CD4-positive, alpha-beta T cell (primary cell): ENCODE measurements at regions of chr7 and their contacts with region 1.

Region 1: DNA sequence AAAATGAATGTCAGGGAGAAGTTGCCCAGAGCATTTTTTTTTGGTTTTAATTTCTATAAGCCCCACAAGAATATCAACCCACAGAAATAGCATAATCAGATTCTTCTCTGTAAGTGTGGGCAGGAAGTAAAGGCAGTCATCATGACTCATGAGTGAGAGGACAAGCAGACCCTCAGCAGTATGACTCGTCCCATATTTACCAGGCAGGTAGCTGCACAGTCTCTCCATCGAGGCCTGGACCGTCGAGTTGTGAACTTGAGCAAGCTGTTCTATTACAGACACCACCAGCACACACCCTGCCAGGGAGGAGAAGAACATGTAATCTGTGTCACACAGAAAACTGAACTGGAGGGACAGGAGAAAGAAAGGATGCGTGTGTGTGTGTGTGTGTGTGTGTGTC is 37.8 kb downstream of the AOAH start:
- DNase-seq: peak in 7 of 14 experiments; percentile 12 to 64 (median 31)
- ATAC-seq: peak; percentile 73
- H3K4me3 ChIP-seq: no peak overlapping the region
- H3K4me3 Mint-ChIP-seq: no peak overlapping the region
- H3K27ac ChIP-seq: no peak overlapping the region
- H3K27ac Mint-ChIP-seq: no peak overlapping the region
- H3K4me1 ChIP-seq: peaks cover 7% of the 10 kb centered on the region
- H3K4me1 Mint-ChIP-seq: peaks cover 60% of the 10 kb centered on the region
- H3K27me3 ChIP-seq: no peaks in the 10 kb centered on the region
- H3K27me3 Mint-ChIP-seq: no peaks in the 10 kb centered on the region
- CTCF ChIP-seq: no peak

Region 2: DNA sequence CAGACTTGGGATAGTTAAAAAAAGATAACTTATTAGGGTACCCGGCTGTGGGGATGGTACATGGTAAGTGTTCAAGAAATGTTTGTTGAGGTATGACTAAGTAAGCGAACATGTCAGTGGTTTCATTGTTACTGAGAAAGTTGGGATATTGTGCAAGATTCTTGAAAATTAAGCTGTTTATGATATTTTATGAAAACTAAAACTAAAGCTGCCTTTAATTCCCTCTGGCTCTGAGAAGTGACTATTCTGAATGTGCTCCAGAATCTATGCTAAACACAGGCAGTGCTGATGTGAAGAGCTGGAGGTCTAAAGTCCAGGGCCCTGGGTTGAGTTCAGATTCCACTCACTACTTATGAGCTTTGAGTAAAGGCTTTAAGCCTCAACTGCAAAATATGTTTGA is 35.1 kb before region 1 on chr7:
- CTCF ChIA-PET with region 1: no interaction called
- POLR2A ChIA-PET with region 1: no interaction called
- intact Hi-C with region 1: no loop called
- DNase-seq: no peak
- ATAC-seq: no peak
- H3K4me3 ChIP-seq: no peak overlapping the region
- H3K4me3 Mint-ChIP-seq: no peak overlapping the region
- H3K27ac ChIP-seq: no peak overlapping the region
- H3K27ac Mint-ChIP-seq: no peak overlapping the region
- H3K4me1 ChIP-seq: peaks cover 3% of the 10 kb centered on the region
- H3K4me1 Mint-ChIP-seq: peaks cover 46% of the 10 kb centered on the region
- H3K27me3 ChIP-seq: no peaks in the 10 kb centered on the region
- H3K27me3 Mint-ChIP-seq: no peaks in the 10 kb centered on the region
- CTCF ChIP-seq: no peak

Region 3: DNA sequence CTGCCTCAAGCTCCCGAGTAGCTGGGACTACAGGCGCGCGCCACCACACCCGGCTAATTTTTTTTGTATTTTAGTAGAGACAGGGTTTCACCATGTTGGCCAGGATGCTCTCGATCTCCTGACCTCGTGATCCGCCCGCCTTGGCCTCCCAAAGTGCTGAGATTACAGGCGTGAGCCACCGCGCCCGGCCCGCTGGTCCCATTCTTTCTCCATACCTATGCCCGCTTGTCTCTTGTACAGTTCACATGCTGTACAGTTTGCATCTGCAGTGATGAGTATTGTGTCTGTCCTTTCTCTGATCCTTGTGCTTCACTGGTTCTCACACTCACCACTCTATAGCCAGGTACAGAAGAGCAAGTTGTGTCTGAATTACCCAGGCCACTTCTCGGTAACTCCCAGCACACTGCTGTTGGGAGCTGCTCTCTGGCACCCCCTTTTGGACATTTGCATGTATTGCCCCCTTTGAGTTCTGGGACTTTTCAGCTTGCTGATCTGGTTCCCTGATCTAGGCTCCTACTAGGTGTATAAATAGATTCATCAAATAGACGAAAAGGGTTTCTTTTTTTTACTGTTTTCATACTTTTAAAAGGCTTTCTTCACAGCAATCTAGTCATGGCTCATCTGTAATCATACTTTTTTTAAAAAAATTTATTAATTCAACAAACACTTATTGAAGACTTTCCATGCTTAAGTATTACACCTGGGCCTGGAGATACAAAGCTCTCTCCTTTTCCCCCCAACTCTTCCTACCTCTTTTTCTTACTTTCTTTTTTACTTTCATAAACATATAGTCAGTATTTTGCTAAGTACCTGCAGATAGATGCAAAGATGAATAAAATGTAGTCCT is 15.7 kb before region 1 on chr7:
- CTCF ChIA-PET with region 1: interaction called, 12 read pairs
- POLR2A ChIA-PET with region 1: no interaction called
- intact Hi-C with region 1: no loop called
- DNase-seq: peak; percentile 50 to 89 (median 60)
- ATAC-seq: peak; percentile 99
- H3K4me3 ChIP-seq: no peak overlapping the region
- H3K4me3 Mint-ChIP-seq: no peak overlapping the region
- H3K27ac ChIP-seq: no peak overlapping the region
- H3K27ac Mint-ChIP-seq: no peak overlapping the region
- H3K4me1 ChIP-seq: peaks cover 5% of the 10 kb centered on the region
- H3K4me1 Mint-ChIP-seq: peaks cover 42% of the 10 kb centered on the region
- H3K27me3 ChIP-seq: no peaks in the 10 kb centered on the region
- H3K27me3 Mint-ChIP-seq: no peaks in the 10 kb centered on the region
- CTCF ChIP-seq: peak; percentile 89

Region 4: GRCh38 chr7:36784991-36785940 is 98.8 kb after region 1 on chr7:
- CTCF ChIA-PET with region 1: no interaction called
- POLR2A ChIA-PET with region 1: no interaction called
- intact Hi-C with region 1: loop called in 1 of 2 experiments (anchors 5 kb)
- DNase-seq: peak; percentile 41 to 93 (median 58)
- ATAC-seq: peak; percentile 79
- H3K4me3 ChIP-seq: no peak overlapping the region
- H3K4me3 Mint-ChIP-seq: peak overlapping the region; percentile 53
- H3K27ac ChIP-seq: peak overlapping the region; percentile 61 to 71
- H3K27ac Mint-ChIP-seq: peak overlapping the region; percentile 86
- H3K4me1 ChIP-seq: peaks cover 63% of the 10 kb centered on the region
- H3K4me1 Mint-ChIP-seq: peaks cover 82% of the 10 kb centered on the region
- H3K27me3 ChIP-seq: no peaks in the 10 kb centered on the region
- H3K27me3 Mint-ChIP-seq: no peaks in the 10 kb centered on the region
- CTCF ChIP-seq: no peak

Region 5: GRCh38 chr7:37201003-37201875 is 514.7 kb after region 1 on chr7:
- CTCF ChIA-PET with region 1: no interaction called
- POLR2A ChIA-PET with region 1: no interaction called
- intact Hi-C with region 1: loop called in 1 of 2 experiments (anchors 5 kb)
- DNase-seq: peak in 12 of 14 experiments; percentile 8 to 67 (median 34)
- ATAC-seq: no peak
- H3K4me3 ChIP-seq: no peak overlapping the region
- H3K4me3 Mint-ChIP-seq: no peak overlapping the region
- H3K27ac ChIP-seq: no peak overlapping the region
- H3K27ac Mint-ChIP-seq: peak overlapping the region; percentile 3
- H3K4me1 ChIP-seq: no peaks in the 10 kb centered on the region
- H3K4me1 Mint-ChIP-seq: peaks cover 8% of the 10 kb centered on the region
- H3K27me3 ChIP-seq: no peaks in the 10 kb centered on the region
- H3K27me3 Mint-ChIP-seq: no peaks in the 10 kb centered on the region
- CTCF ChIP-seq: peak; percentile 53

Region 6: DNA sequence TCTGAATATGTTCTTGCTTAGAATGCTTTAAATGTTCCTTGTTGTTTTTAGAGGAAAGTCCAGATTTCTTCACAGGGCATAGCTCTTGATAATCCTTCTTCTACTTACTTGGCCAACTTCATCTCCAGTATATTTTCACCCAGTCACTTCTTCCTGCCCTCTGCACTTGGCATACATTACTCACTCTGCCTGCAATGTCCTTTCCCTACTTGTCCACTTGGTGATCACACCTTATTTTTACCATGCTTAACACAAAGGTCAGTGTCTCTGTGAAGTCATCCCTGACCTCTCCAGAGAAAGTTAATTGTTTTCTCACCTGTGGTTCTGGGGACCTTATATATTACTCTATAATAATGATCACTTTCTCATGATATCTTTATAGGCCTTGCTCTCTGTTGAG is 1206.9 kb after region 1 on chr7:
- CTCF ChIA-PET with region 1: no interaction called
- POLR2A ChIA-PET with region 1: no interaction called
- intact Hi-C with region 1: no loop called
- DNase-seq: no peak
- ATAC-seq: no peak
- H3K4me3 ChIP-seq: no peak overlapping the region
- H3K4me3 Mint-ChIP-seq: no peak overlapping the region
- H3K27ac ChIP-seq: no peak overlapping the region
- H3K27ac Mint-ChIP-seq: no peak overlapping the region
- H3K4me1 ChIP-seq: no peaks in the 10 kb centered on the region
- H3K4me1 Mint-ChIP-seq: no peaks in the 10 kb centered on the region
- H3K27me3 ChIP-seq: peaks cover 3 to 5% of the 10 kb centered on the region in 2 experiments
- H3K27me3 Mint-ChIP-seq: peaks cover 8% of the 10 kb centered on the region
- CTCF ChIP-seq: no peak